ENCODE measurements at regions of chr1 and their contacts with region 1.

Region 1: GRCh38 chr1:208245185-208245705 is 1.1 kb upstream of the PLXNA2 start:
- DNase-seq: peak; percentile 60 to 95 (median 87)

Region 2: DNA sequence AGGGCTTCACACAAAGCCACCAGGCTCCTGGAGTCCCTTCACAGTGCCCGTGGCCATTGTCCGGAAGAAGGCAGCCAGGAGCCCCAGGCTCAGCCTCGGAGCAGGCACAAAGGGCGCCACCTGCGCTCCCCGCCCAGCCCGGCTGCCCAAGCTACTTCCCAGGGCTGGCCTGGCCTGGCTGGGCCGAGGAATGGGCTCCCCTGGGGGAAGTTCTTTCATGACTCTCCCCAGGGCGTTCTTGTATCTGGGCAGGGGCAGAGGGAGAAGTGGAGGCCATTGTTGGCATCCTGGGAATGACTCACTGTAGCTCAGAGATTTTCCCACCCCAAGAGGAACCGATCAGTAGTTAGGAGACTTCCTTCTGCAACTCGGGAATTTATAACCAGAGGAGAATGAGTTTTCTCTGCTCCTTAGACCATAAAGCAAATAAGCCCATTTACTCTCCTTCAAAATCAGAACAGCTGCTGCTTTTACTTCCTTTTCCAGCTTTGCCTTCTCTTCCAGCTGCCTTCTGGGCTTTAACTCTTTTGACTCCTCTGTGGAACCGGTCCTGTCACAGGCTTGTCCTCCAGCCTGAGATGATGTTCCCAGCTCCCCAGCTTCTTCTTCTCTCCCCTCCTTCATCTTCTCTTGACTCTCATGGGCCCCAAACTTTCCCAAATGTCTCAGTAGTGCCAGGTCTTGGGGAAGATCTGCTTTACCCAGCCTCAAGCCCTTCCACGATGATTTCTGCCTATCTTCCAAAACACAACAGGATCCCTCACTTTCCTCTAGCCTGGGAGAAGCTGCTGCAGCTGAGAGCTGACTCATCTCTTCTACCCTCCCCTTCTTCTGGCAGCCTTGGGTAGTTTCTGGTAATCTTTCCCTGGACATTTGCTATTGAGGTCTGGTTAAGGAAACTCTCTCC is 215.6 kb before region 1 on chr1:
- intact Hi-C with region 1: loop called (anchors 1 kb)
- DNase-seq: no peak

Region 3: GRCh38 chr1:208081972-208082371 is 163.3 kb before region 1 on chr1:
- intact Hi-C with region 1: loop called (anchors 5 kb)
- DNase-seq: peak in 4 of 10 donors; percentile 28 to 74 (median 50)

Region 4: GRCh38 chr1:208132287-208132883 is 112.9 kb before region 1 on chr1:
- intact Hi-C with region 1: loop called (anchors 5 kb)
- DNase-seq: peak in 9 of 10 donors; percentile 36 to 91 (median 48)

Region 5: GRCh38 chr1:208374391-208374941 is 129.2 kb after region 1 on chr1:
- intact Hi-C with region 1: no loop called
- DNase-seq: no peak

Measured in posterior cingulate gyrus (tissue), 11 donors.